ENCODE measurements at regions of chr4 and their contacts with region 1.

Region 1: GRCh38 chr4:10239982-10240654 is 123.5 kb upstream of the WDR1 start:
- DNase-seq: peak; percentile 76 to 89 (median 82)
- ATAC-seq: peak; percentile 87
- H3K4me3 ChIP-seq: no peak overlapping the region
- H3K27ac ChIP-seq: peak overlapping the region; percentile 68
- H3K4me1 ChIP-seq: peaks cover 4 to 53% of the 10 kb centered on the region in 2 experiments; a peak in 4 of 5 replicates
- H3K27me3 ChIP-seq: no peaks in the 10 kb centered on the region
- CTCF ChIP-seq: no peak
- EP300 ChIP-seq: peak; percentile 79
- POLR2A ChIP-seq: no peak
- RAD21 ChIP-seq: no peak; a peak in 1 of 4 replicates

Region 2: DNA sequence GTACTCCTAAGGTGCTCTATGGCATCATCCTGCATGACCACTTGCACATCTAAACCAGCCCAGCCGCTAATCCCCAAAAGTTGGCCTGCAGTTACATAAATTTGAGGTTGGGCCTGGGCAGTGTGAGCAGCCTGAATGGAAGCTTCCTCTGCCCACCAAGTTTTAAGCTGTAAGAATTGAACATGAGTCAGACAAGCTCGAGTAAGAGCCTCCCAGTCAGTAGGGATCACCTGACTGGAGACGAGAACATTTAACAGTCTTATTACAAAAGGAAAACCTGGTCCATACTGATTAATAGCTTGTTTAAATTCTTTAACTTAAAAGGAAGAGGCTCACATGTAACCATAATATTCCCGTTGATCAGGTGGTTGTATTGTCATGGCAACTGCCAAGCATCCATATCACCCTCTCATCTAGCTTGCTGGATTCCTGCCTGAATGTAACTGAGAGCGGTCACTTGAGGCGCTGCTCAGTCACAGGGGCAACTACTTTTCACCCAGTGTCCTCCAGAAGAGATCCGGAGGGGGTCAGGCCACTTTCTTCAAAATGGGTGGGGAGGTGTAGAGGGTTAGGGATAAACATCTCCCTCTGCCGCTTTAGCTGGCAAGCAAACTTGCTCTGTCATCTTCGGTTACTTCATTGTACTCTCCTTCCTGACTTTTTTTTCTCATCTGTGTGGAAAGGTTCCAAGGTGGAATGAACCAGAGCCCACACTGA is 66.9 kb before region 1 on chr4:
- CTCF ChIA-PET with region 1: no interaction called
- POLR2A ChIA-PET with region 1: no interaction called
- in situ Hi-C with region 1: no loop called
- intact Hi-C with region 1: loop called (anchors 2 kb)
- DNase-seq: peak; percentile 83 to 96 (median 86)
- ATAC-seq: peak; percentile 90
- H3K4me3 ChIP-seq: no peak overlapping the region; the same call in 1 of the 2 replicates
- H3K27ac ChIP-seq: peak overlapping the region; percentile 93
- H3K4me1 ChIP-seq: peaks cover 27 to 76% of the 10 kb centered on the region in 2 experiments
- H3K27me3 ChIP-seq: no peaks in the 10 kb centered on the region
- CTCF ChIP-seq: peak; percentile 90 to 97 (median 92)
- EP300 ChIP-seq: peak; percentile 95
- POLR2A ChIP-seq: no peak
- RAD21 ChIP-seq: peak; percentile 89 to 90

Region 3: GRCh38 chr4:10180927-10181782 is 59.0 kb before region 1 on chr4:
- CTCF ChIA-PET with region 1: no interaction called
- POLR2A ChIA-PET with region 1: interaction called, 3 read pairs
- in situ Hi-C with region 1: no loop called
- intact Hi-C with region 1: loop called (anchors 2 kb)
- DNase-seq: peak; percentile 90 to 96 (median 94)
- ATAC-seq: peak; percentile 83
- H3K4me3 ChIP-seq: no peak overlapping the region
- H3K27ac ChIP-seq: peak overlapping the region; percentile 100
- H3K4me1 ChIP-seq: peaks cover 30 to 85% of the 10 kb centered on the region in 2 experiments
- H3K27me3 ChIP-seq: no peaks in the 10 kb centered on the region
- CTCF ChIP-seq: no peak
- EP300 ChIP-seq: peak; percentile 99
- POLR2A ChIP-seq: peak; percentile 82
- RAD21 ChIP-seq: peak in 1 of 2 experiments; percentile 19; a peak in 1 of 4 replicates

Region 4: DNA sequence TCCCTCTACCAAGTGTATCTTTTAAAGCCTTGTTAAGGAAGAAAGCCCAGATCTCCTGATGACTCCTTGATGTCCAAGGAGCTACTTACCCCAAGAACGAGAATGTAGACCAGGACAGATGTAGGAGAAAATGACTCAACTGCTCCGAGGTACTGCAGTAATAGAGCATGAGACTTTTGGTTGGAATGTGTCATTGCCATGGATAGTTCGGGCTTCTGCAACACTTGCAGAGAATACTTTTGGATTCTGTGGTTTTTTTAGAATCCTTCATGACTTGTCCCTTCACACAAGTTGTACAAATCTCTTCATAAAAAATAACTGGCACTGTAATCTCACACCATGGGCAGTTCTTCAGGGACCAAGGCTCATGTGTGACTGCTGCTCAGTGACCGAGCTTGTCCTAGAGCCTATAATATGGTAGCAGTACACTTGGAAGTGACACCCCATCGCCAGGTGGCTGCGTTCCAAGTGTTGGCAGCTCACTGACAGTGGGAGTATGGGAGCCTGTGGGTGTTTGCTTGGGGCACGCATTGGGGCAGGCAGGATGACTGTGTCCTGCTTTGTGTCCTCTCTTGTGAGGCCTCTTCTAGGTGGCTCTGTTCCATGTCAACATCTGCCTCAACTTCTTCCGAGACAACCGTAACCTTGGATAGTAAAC is 35.6 kb before region 1 on chr4:
- CTCF ChIA-PET with region 1: no interaction called
- POLR2A ChIA-PET with region 1: interaction called, 3 read pairs
- in situ Hi-C with region 1: no loop called
- intact Hi-C with region 1: loop called (anchors 5 kb)
- DNase-seq: no peak
- ATAC-seq: no peak
- H3K4me3 ChIP-seq: no peak overlapping the region
- H3K27ac ChIP-seq: peak overlapping the region; percentile 26
- H3K4me1 ChIP-seq: peaks cover 20 to 60% of the 10 kb centered on the region in 2 experiments
- H3K27me3 ChIP-seq: no peaks in the 10 kb centered on the region
- CTCF ChIP-seq: no peak
- EP300 ChIP-seq: no peak
- POLR2A ChIP-seq: no peak
- RAD21 ChIP-seq: no peak

Region 5: GRCh38 chr4:10321931-10322330 is 81.8 kb after region 1 on chr4:
- CTCF ChIA-PET with region 1: no interaction called
- POLR2A ChIA-PET with region 1: no interaction called
- in situ Hi-C with region 1: no loop called
- intact Hi-C with region 1: loop called (anchors 5 kb)
- DNase-seq: peak in 2 of 4 experiments; percentile 24 to 25
- ATAC-seq: no peak
- H3K4me3 ChIP-seq: no peak overlapping the region
- H3K27ac ChIP-seq: no peak overlapping the region
- H3K4me1 ChIP-seq: peaks cover 9 to 47% of the 10 kb centered on the region in 2 experiments; a peak in 4 of 5 replicates
- H3K27me3 ChIP-seq: no peaks in the 10 kb centered on the region
- CTCF ChIP-seq: no peak
- EP300 ChIP-seq: no peak
- POLR2A ChIP-seq: no peak
- RAD21 ChIP-seq: 0 out of 4 replicates have a peak, but pooled peaks of 1 of the 2 experiments have one; percentile 18